ENCODE measurements at regions of chrX and their contacts with region 1.

Region 1: DNA sequence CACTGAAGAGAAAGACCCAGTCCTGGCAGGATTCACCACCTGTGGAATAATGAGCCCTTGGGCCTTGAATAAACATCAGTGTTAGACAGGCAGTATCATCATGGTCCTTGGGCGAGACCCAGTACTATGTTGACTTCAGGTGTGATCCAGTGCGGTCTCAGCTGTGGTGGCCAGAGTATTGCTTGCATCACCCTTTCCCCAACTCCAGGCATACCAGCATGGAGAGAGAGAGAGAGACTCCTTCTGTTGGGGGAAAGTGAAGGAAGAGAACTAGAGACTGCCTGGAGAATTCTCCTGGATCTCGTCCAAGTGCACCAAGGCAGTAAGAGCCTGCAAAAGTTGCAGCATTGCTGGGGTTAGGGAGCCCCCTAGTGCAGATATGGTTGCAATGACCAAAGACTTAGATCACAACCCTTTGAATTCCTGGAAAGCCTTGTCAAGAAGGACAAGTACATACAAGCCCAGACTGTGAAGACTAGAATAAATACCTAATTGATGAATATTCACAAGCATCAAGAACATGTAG is 61.1 kb upstream of the VAMP7 start:
- DNase-seq: peak; percentile 88
- H3K4me3 ChIP-seq: no peak overlapping the region
- H3K27ac ChIP-seq: no peak overlapping the region
- H3K4me1 ChIP-seq: peaks cover 9% of the 10 kb centered on the region
- H3K27me3 ChIP-seq: no peaks in the 10 kb centered on the region
- CTCF ChIP-seq: peak; percentile 49 to 68

Region 2: GRCh38 chrX:155216179-155216939 is 603.7 kb before region 1 on chrX and contains the start of gene VBP1:
- CTCF ChIA-PET with region 1: no interaction called
- dilution Hi-C with region 1: no loop called
- in situ Hi-C with region 1: no loop called
- intact Hi-C with region 1: loop called (anchors 2 kb)
- DNase-seq: peak; percentile 90
- H3K4me3 ChIP-seq: peak within 1 kb of the TSS; percentile 72 to 89 (median 84)
- H3K27ac ChIP-seq: peak within 1 kb of the TSS; percentile 67
- H3K4me1 ChIP-seq: peaks cover 3% of the 10 kb centered on the region
- H3K27me3 ChIP-seq: no peaks in the 10 kb centered on the region
- CTCF ChIP-seq: peak; percentile 14 to 42
- total RNA-seq, gene VBP1: 42.2 to 51.3 TPM

Region 3: DNA sequence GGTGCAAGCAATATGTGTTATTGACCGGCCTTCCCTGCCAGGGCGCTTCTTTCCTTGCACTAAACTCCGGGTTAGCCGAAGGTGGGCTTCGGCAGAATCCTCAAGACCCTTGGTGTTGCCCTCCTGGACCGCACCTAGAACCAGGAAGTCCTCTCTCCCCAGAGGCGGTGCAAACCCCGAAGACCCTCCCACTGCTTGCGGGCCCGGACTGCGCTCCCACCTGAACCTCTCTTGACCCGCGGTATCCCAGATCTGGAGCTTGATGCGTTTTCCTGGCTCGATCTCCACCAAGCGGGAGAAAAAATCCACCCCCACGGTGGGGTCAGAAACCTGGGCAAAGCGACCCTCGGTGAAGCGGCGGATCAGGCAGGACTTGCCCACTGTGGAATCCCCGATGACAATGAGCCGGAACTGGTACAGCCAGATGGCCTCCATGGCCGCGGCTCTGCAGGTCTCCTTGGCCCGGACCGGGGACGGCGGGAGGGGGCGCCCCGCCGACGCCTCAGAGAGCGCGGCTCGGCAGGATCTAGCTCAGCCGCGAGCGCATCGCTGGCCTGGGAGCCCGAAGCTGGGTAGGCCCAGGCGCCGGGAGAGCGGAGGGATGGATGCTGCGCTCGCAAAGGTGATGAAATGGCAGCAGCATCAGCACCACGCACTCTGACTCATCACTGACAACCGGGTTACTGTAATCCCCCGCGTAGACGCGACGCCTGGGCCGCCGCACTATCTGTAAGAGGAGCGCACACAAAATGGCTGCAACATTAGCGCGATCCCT is 556.0 kb before region 1 on chrX and contains the start of gene RAB39B:
- CTCF ChIA-PET with region 1: no interaction called
- dilution Hi-C with region 1: no loop called
- in situ Hi-C with region 1: no loop called
- intact Hi-C with region 1: loop called (anchors 5 kb)
- DNase-seq: peak; percentile 60
- H3K4me3 ChIP-seq: peak within 1 kb of the TSS; percentile 36 to 42 (median 41)
- H3K27ac ChIP-seq: no peak within 1 kb of the TSS
- H3K4me1 ChIP-seq: no peaks in the 10 kb centered on the region
- H3K27me3 ChIP-seq: no peaks in the 10 kb centered on the region
- CTCF ChIP-seq: no peak
- total RNA-seq, gene RAB39B: 2.7 to 5.4 TPM

Region 4: GRCh38 chrX:155662282-155662681 is 157.7 kb before region 1 on chrX:
- CTCF ChIA-PET with region 1: no interaction called
- dilution Hi-C with region 1: no loop called
- in situ Hi-C with region 1: no loop called
- intact Hi-C with region 1: loop called (anchors 1 kb)
- DNase-seq: no peak
- H3K4me3 ChIP-seq: no peak overlapping the region
- H3K27ac ChIP-seq: no peak overlapping the region
- H3K4me1 ChIP-seq: no peaks in the 10 kb centered on the region
- H3K27me3 ChIP-seq: no peaks in the 10 kb centered on the region
- CTCF ChIP-seq: peak; percentile 17 to 55

Measured in mammary epithelial cell (primary cell).